Naive thymus-derived CD4-positive, alpha-beta T cell (primary cell): ENCODE measurements at regions of chr18 and their contacts with region 1.

Region 1: GRCh38 chr18:64409511-64409910 is 260.6 kb upstream of the LINC00305 start:
- DNase-seq: no peak
- ATAC-seq: no peak
- H3K4me3 ChIP-seq: no peak overlapping the region
- H3K4me3 Mint-ChIP-seq: no peak overlapping the region
- H3K27ac ChIP-seq: no peak overlapping the region
- H3K27ac Mint-ChIP-seq: no peak overlapping the region
- H3K4me1 ChIP-seq: no peaks in the 10 kb centered on the region
- H3K4me1 Mint-ChIP-seq: no peaks in the 10 kb centered on the region
- H3K27me3 ChIP-seq: no peaks in the 10 kb centered on the region
- H3K27me3 Mint-ChIP-seq: no peaks in the 10 kb centered on the region

Region 2: DNA sequence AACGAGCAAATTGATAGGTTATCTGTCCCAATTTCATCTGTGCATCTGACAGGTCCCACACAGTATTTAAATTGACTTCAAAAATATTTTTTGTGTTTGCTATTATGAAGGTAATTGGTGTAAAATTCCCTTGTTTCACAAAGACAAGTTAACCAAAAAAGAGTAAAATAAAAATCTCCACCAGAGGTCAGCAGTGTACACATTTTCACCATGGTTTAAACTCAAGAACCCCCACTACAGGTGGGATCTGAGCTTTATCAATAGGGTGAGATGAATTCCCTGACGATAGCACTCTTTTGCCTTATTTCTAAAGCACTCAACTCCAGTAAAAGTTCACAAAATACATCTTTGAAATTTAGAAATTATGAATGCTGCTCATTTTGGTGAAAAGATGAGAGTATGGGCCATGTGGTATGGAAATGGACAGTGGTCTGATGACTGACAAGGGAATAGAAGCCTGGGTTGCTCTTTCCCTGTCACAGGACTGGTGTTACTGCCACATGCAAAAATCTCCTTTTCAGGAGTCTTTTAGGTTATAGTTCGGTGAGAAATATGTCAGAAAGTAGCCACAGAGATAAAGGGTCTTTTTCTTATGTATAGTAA is 371.6 kb before region 1 on chr18:
- CTCF ChIA-PET with region 1: no interaction called
- POLR2A ChIA-PET with region 1: no interaction called
- intact Hi-C with region 1: loop called in 1 of 2 experiments (anchors 5 kb)
- DNase-seq: peak in 3 of 9 donors; percentile 5 to 15 (median 11)
- ATAC-seq: no peak
- H3K4me3 ChIP-seq: no peak overlapping the region
- H3K4me3 Mint-ChIP-seq: no peak overlapping the region
- H3K27ac ChIP-seq: no peak overlapping the region
- H3K27ac Mint-ChIP-seq: no peak overlapping the region
- H3K4me1 ChIP-seq: no peaks in the 10 kb centered on the region
- H3K4me1 Mint-ChIP-seq: no peaks in the 10 kb centered on the region
- H3K27me3 ChIP-seq: no peaks in the 10 kb centered on the region
- H3K27me3 Mint-ChIP-seq: peaks cover 0 to 19% (median 3%) of the 10 kb centered on the region in 5 donors